ENCODE measurements at regions of chr2 and their contacts with region 1.

Region 1: GRCh38 chr2:424306-425165 is 136.6 kb upstream of the ALKAL2 start:
- DNase-seq: peak; percentile 49 to 98
- H3K4me3 ChIP-seq: peak overlapping the region; percentile 42; the same call in 1 of the 2 replicates
- H3K27ac ChIP-seq: peak overlapping the region; percentile 95
- H3K4me1 ChIP-seq: peaks cover 30% of the 10 kb centered on the region
- H3K27me3 ChIP-seq: no peaks in the 10 kb centered on the region
- CTCF ChIP-seq: no peak

Region 2: GRCh38 chr2:246489-247144 is 177.9 kb before region 1 on chr2:
- CTCF ChIA-PET with region 1: no interaction called
- POLR2A ChIA-PET with region 1: no interaction called
- intact Hi-C with region 1: no loop called
- DNase-seq: peak; percentile 25 to 46
- H3K4me3 ChIP-seq: no peak overlapping the region
- H3K27ac ChIP-seq: no peak overlapping the region
- H3K4me1 ChIP-seq: no peaks in the 10 kb centered on the region
- H3K27me3 ChIP-seq: no peaks in the 10 kb centered on the region
- CTCF ChIP-seq: peak; percentile 75

Region 3: GRCh38 chr2:264660-265468 is 159.7 kb before region 1 on chr2 and contains the start of gene ACP1:
- CTCF ChIA-PET with region 1: no interaction called
- POLR2A ChIA-PET with region 1: no interaction called
- intact Hi-C with region 1: loop called (anchors 1 kb)
- DNase-seq: peak; percentile 93 to 98
- H3K4me3 ChIP-seq: peak within 1 kb of the TSS; percentile 83
- H3K27ac ChIP-seq: peak within 1 kb of the TSS; percentile 93
- H3K4me1 ChIP-seq: peaks cover 33% of the 10 kb centered on the region
- H3K27me3 ChIP-seq: no peaks in the 10 kb centered on the region
- CTCF ChIP-seq: no peak
- total RNA-seq, gene ACP1: 115 and 116 TPM in 2 replicates

Region 4: GRCh38 chr2:437762-438393 is 13.3 kb after region 1 on chr2:
- CTCF ChIA-PET with region 1: no interaction called
- POLR2A ChIA-PET with region 1: interaction called, 8 read pairs
- intact Hi-C with region 1: loop called (anchors 1 kb)
- DNase-seq: peak; percentile 61 to 89
- H3K4me3 ChIP-seq: peak overlapping the region; percentile 13; the same call in 1 of the 2 replicates
- H3K27ac ChIP-seq: peak overlapping the region; percentile 67
- H3K4me1 ChIP-seq: peaks cover 13% of the 10 kb centered on the region; the same call in 1 of the 2 replicates
- H3K27me3 ChIP-seq: no peaks in the 10 kb centered on the region
- CTCF ChIP-seq: no peak

Region 5: GRCh38 chr2:1707771-1708418 is 1283.4 kb after region 1 on chr2:
- CTCF ChIA-PET with region 1: no interaction called
- POLR2A ChIA-PET with region 1: interaction called, 11 read pairs
- intact Hi-C with region 1: no loop called
- DNase-seq: peak in 1 of 2 experiments; percentile 44
- H3K4me3 ChIP-seq: no peak overlapping the region
- H3K27ac ChIP-seq: no peak overlapping the region
- H3K4me1 ChIP-seq: no peaks in the 10 kb centered on the region
- H3K27me3 ChIP-seq: peaks cover 21% of the 10 kb centered on the region
- CTCF ChIP-seq: no peak